GM18951 (cell line): ENCODE measurements at regions of chr14 and their contacts with region 1.

Region 1: GRCh38 chr14:70013269-70013873 is 134.2 kb downstream of the SMOC1 start:
- POLR2A ChIP-seq: no peak

Region 2: DNA sequence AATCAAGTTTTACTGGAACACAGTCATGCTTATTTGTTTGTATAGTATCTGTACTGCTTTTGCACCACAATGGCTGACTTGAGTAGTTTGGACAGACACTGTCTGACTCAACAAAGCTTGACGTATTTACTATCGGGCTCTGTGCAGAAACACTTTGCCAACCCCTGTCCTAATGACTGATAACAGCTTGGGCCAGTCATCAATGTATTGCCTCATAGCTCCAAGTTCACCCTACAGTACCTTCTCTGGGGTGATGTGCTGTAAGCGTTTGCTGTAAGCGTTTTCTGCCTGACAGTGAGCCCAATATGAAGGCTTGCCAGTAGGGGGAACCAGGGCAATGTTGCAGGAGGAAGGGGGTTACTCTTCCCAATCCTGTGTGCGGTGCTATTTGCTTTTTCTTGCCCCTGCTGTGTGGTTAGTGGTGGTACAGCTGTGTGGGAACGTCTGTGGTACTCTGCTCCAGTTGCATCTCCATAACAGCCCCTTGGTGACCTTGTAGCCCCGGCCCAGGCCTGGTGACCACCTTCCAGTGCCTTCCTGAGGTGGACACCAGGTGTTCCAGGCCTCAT is 433.3 kb before region 1 on chr14:
- in situ Hi-C with region 1: loop called (anchors 25 kb)
- POLR2A ChIP-seq: no peak

Region 3: GRCh38 chr14:69818757-69819191 is 194.6 kb before region 1 on chr14:
- in situ Hi-C with region 1: loop called (anchors 10 kb)
- POLR2A ChIP-seq: no peak